ENCODE measurements at regions of chr6 and their contacts with region 1.

Region 1: GRCh38 chr6:12577124-12577850 is 139.3 kb upstream of the PHACTR1 start:
- DNase-seq: peak; percentile 26
- H3K27ac ChIP-seq: peak overlapping the region; percentile 81
- CTCF ChIP-seq: no peak

Region 2: GRCh38 chr6:12436683-12437082 is 140.6 kb before region 1 on chr6:
- CTCF ChIA-PET with region 1: no interaction called
- POLR2A ChIA-PET with region 1: interaction called, 16 read pairs
- DNase-seq: no peak
- H3K27ac ChIP-seq: no peak overlapping the region
- CTCF ChIP-seq: no peak